Heart left ventricle (tissue), 16 donors: ENCODE measurements at regions of chr5 and their contacts with region 1.

Region 1: DNA sequence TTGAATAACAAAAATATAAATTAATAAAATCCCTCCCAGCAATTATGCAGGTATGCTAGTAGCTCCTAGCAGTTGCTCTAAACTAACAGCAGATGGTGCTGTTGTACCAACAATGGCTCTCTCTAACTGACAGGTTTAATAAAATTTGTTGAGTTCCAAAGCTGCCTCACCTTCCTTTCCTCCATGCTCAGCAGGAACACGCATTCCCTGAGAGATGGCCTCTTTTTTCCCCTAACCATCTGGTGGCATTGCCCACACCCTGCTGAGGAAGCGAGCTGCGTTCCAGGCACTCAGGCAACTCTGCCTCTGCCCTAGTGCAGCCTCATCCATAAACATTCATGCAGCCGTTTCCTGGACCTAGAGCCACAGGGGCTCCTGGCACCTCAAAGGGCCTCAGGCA is 106.2 kb downstream of the KLHL3 start:
- DNase-seq: no peak
- ATAC-seq: peak; percentile 20 to 74 (median 60)
- H3K4me3 ChIP-seq: no peak overlapping the region
- H3K27ac ChIP-seq: peak overlapping the region in 11 of 12 donors; percentile 25 to 74 (median 57)
- H3K4me1 ChIP-seq: peaks cover 0 to 36% (median 20%) of the 10 kb centered on the region in 12 donors
- H3K27me3 ChIP-seq: no peaks in the 10 kb centered on the region
- CTCF ChIP-seq: peak; percentile 82 to 97 (median 90)
- POLR2A ChIP-seq: no peak

Region 2: GRCh38 chr5:137395008-137395755 is 234.5 kb before region 1 on chr5:
- intact Hi-C with region 1: no loop called
- DNase-seq: no peak
- ATAC-seq: no peak
- H3K4me3 ChIP-seq: no peak overlapping the region
- H3K27ac ChIP-seq: peak overlapping the region in 1 of 12 donors; percentile 20
- H3K4me1 ChIP-seq: no peaks in the 10 kb centered on the region
- H3K27me3 ChIP-seq: peaks cover 0 to 3% (median 0%) of the 10 kb centered on the region in 9 donors
- CTCF ChIP-seq: no peak
- POLR2A ChIP-seq: no peak

Region 3: GRCh38 chr5:137660349-137660817 is 30.7 kb after region 1 on chr5:
- intact Hi-C with region 1: loop called in 2 of 10 experiments (anchors 1 to 5 kb)
- DNase-seq: peak in 4 of 5 donors; percentile 60 to 70 (median 68)
- ATAC-seq: peak; percentile 69 to 91 (median 85)
- H3K4me3 ChIP-seq: no peak overlapping the region
- H3K27ac ChIP-seq: no peak overlapping the region
- H3K4me1 ChIP-seq: peaks cover 0 to 11% (median 5%) of the 10 kb centered on the region in 12 donors
- H3K27me3 ChIP-seq: no peaks in the 10 kb centered on the region
- CTCF ChIP-seq: peak; percentile 66 to 89 (median 78)
- POLR2A ChIP-seq: no peak

Region 4: DNA sequence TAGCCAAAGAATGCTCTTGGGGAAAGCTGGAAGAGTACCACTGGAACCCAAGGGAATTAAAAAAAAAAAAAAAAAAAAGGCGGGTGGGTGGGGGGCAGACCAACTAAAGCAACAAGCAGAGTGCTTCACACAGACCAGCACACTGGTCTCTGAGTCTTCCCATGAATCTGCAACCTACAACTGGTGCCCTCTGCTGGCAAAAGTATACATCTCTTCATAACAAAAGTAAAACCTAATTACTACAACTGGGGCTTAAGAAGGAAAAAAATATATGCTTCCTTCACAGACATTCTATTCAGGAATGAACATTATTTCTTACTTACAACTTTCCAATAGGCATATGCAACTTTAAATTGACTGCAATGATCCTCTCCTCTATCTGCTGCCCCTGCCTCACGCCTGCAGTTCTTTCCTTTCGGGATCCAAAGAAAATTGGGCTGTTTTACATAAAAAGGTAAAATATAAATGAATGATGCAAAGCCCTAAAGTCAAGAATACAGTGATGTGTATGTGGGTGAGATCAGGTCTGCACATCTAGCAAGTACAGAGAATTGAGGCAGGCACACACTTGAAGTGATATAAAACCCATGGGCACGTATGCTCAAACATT is 113.5 kb after region 1 on chr5:
- intact Hi-C with region 1: loop called in 8 of 10 experiments (anchors 1 to 5 kb)
- DNase-seq: peak in 4 of 5 donors; percentile 33 to 63 (median 49)
- ATAC-seq: peak; percentile 61 to 82 (median 71)
- H3K4me3 ChIP-seq: no peak overlapping the region
- H3K27ac ChIP-seq: no peak overlapping the region
- H3K4me1 ChIP-seq: peaks cover 0 to 22% (median 6%) of the 10 kb centered on the region in 12 donors
- H3K27me3 ChIP-seq: no peaks in the 10 kb centered on the region
- CTCF ChIP-seq: peak; percentile 47 to 75 (median 66)
- POLR2A ChIP-seq: no peak

Region 5: GRCh38 chr5:138138949-138139780 is 509.5 kb after region 1 on chr5 and contains the start of gene NME5:
- intact Hi-C with region 1: loop called in 3 of 10 experiments (anchors 10 kb)
- DNase-seq: peak; percentile 55 to 80 (median 76)
- ATAC-seq: peak; percentile 71 to 96 (median 94)
- H3K4me3 ChIP-seq: peak within 1 kb of the TSS in 11 of 12 donors; percentile 24 to 83 (median 66)
- H3K27ac ChIP-seq: peak within 1 kb of the TSS in 1 of 12 donors; percentile 16
- H3K4me1 ChIP-seq: peaks cover 0 to 7% (median 0%) of the 10 kb centered on the region in 12 donors
- H3K27me3 ChIP-seq: peaks cover 0 to 22% (median 0%) of the 10 kb centered on the region in 9 donors
- CTCF ChIP-seq: no peak
- POLR2A ChIP-seq: no peak
- total RNA-seq, gene NME5: 0.50 to 5.1 (median 3.4) TPM